ENCODE measurements at regions of chr4 and their contacts with region 1.

Region 1: GRCh38 chr4:109406338-109406931 is 27.2 kb upstream of the SEC24B start:
- DNase-seq: no peak
- ATAC-seq: peak; percentile 94
- H3K4me3 ChIP-seq: no peak overlapping the region
- H3K27ac ChIP-seq: no peak overlapping the region
- H3K4me1 ChIP-seq: no peaks in the 10 kb centered on the region
- H3K27me3 ChIP-seq: peaks cover 0 to 3% of the 10 kb centered on the region in 2 experiments; a peak in 1 of 4 replicates
- CTCF ChIP-seq: peak; percentile 59 to 76 (median 72); a peak in 5 of 6 replicates
- EP300 ChIP-seq: no peak
- POLR2A ChIP-seq: no peak
- RAD21 ChIP-seq: peak; percentile 82

Region 2: GRCh38 chr4:108683479-108683878 is 723.0 kb before region 1 on chr4:
- CTCF ChIA-PET with region 1: interaction called, 4 read pairs
- POLR2A ChIA-PET with region 1: no interaction called
- RAD21 ChIA-PET with region 1: no interaction called
- SMC1A ChIA-PET with region 1: interaction called, 3 read pairs
- in situ Hi-C with region 1: loop called (anchors 10 kb)
- intact Hi-C with region 1: loop called (anchors 1 kb)
- DNase-seq: no peak
- ATAC-seq: peak; percentile 70
- H3K4me3 ChIP-seq: no peak overlapping the region
- H3K27ac ChIP-seq: no peak overlapping the region
- H3K4me1 ChIP-seq: no peaks in the 10 kb centered on the region
- H3K27me3 ChIP-seq: no peaks in the 10 kb centered on the region
- CTCF ChIP-seq: peak in 2 of 3 experiments; percentile 29 to 35; a peak in 2 of 6 replicates
- EP300 ChIP-seq: no peak
- POLR2A ChIP-seq: no peak
- RAD21 ChIP-seq: peak; percentile 39

Region 3: DNA sequence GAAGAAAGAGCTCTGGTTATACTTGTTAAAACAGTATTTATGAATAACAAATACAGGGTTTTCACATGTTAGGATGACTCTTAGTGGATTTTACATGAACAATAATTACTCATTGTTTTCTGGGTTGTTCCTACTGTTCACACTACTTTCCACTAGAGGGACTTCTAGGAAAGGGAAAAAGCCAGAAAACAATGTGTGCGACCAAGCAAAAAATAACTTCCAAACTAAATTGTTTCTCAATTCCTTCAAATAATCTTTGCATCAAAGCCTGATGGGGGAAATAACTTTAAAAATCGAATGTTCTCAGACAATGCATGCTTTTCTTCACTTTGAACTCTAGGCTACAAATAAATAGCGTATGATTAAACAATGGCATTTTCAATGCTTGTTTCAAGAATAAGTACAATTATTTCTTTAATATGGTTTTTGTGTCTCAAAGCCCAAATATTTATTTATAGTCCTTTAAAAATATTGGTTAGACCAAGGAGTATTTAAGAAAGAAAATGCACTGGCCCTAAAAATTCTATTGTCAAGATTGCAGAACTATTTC is 571.5 kb before region 1 on chr4:
- CTCF ChIA-PET with region 1: interaction called, 5 read pairs
- POLR2A ChIA-PET with region 1: no interaction called
- RAD21 ChIA-PET with region 1: no interaction called
- SMC1A ChIA-PET with region 1: no interaction called
- in situ Hi-C with region 1: loop called (anchors 10 kb)
- intact Hi-C with region 1: loop called (anchors 1 kb)
- DNase-seq: no peak
- ATAC-seq: peak; percentile 48; the same call in 1 of the 3 replicates
- H3K4me3 ChIP-seq: no peak overlapping the region
- H3K27ac ChIP-seq: no peak overlapping the region
- H3K4me1 ChIP-seq: no peaks in the 10 kb centered on the region
- H3K27me3 ChIP-seq: no peaks in the 10 kb centered on the region
- CTCF ChIP-seq: peak; percentile 33 to 54 (median 51); a peak in 5 of 6 replicates
- EP300 ChIP-seq: no peak
- POLR2A ChIP-seq: no peak
- RAD21 ChIP-seq: peak; percentile 66

Region 4: DNA sequence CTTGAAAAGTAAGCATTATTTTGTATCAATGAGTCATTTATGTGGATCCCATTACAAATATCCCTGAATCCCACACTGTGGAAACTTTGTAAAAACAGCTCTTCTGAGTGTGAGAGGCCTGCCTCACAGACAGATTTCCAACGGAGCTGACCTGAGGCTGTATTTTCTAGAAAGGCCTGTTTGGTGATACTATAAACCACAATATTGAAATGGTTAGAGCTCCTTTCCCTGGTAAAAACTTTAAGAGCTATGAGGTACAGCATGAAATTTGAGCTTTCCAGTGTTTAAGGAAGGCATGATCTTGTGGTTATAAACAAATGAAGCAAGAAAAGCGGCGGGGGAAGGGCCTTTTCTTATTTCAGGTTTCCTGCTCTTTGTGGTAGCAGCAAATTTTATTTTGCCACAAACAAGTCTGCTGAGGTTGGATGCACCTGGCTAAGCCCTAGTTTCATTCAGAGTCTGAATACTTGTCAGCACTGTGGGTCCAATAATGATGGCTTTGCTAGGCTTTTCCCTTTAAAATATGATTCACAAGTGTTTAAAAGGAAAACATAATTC is 556.7 kb before region 1 on chr4:
- CTCF ChIA-PET with region 1: no interaction called
- POLR2A ChIA-PET with region 1: no interaction called
- RAD21 ChIA-PET with region 1: no interaction called
- SMC1A ChIA-PET with region 1: no interaction called
- in situ Hi-C with region 1: loop called (anchors 10 kb)
- intact Hi-C with region 1: no loop called
- DNase-seq: peak; percentile 13
- ATAC-seq: peak; percentile 68
- H3K4me3 ChIP-seq: no peak overlapping the region
- H3K27ac ChIP-seq: no peak overlapping the region
- H3K4me1 ChIP-seq: peaks cover 4% of the 10 kb centered on the region; the same call in 1 of the 2 replicates
- H3K27me3 ChIP-seq: no peaks in the 10 kb centered on the region
- CTCF ChIP-seq: no peak
- EP300 ChIP-seq: no peak
- POLR2A ChIP-seq: no peak
- RAD21 ChIP-seq: no peak

Region 5: GRCh38 chr4:109078724-109079123 is 327.7 kb before region 1 on chr4:
- CTCF ChIA-PET with region 1: interaction called, 3 read pairs
- POLR2A ChIA-PET with region 1: no interaction called
- RAD21 ChIA-PET with region 1: no interaction called
- SMC1A ChIA-PET with region 1: interaction called, 3 read pairs
- in situ Hi-C with region 1: no loop called
- intact Hi-C with region 1: loop called (anchors 10 kb)
- DNase-seq: no peak
- ATAC-seq: no peak
- H3K4me3 ChIP-seq: no peak overlapping the region
- H3K27ac ChIP-seq: no peak overlapping the region
- H3K4me1 ChIP-seq: no peaks in the 10 kb centered on the region
- H3K27me3 ChIP-seq: no peaks in the 10 kb centered on the region
- CTCF ChIP-seq: no peak
- EP300 ChIP-seq: no peak
- POLR2A ChIP-seq: no peak
- RAD21 ChIP-seq: no peak